ENCODE measurements at regions of chr1 and their contacts with region 1.

Region 1: GRCh38 chr1:164617377-164618201 is 58.6 kb downstream of the PBX1 start:
- DNase-seq: peak in 1 of 2 experiments; percentile 47
- H3K4me3 ChIP-seq: no peak overlapping the region
- H3K4me3 Mint-ChIP-seq: no peak overlapping the region
- H3K27ac Mint-ChIP-seq: no peak overlapping the region
- H3K4me1 ChIP-seq: peaks cover 32% of the 10 kb centered on the region
- H3K4me1 Mint-ChIP-seq: peaks cover 30% of the 10 kb centered on the region
- H3K27me3 ChIP-seq: no peaks in the 10 kb centered on the region
- H3K27me3 Mint-ChIP-seq: no peaks in the 10 kb centered on the region
- CTCF ChIP-seq: peak; percentile 44 to 46

Region 2: GRCh38 chr1:164440232-164440631 is 177.4 kb before region 1 on chr1:
- CTCF ChIA-PET with region 1: no interaction called
- POLR2A ChIA-PET with region 1: no interaction called
- intact Hi-C with region 1: loop called (anchors 5 kb)
- DNase-seq: peak; percentile 49 to 56
- H3K4me3 ChIP-seq: no peak overlapping the region
- H3K4me3 Mint-ChIP-seq: no peak overlapping the region
- H3K27ac Mint-ChIP-seq: no peak overlapping the region
- H3K4me1 ChIP-seq: no peaks in the 10 kb centered on the region
- H3K4me1 Mint-ChIP-seq: no peaks in the 10 kb centered on the region
- H3K27me3 ChIP-seq: no peaks in the 10 kb centered on the region
- H3K27me3 Mint-ChIP-seq: peaks cover 5% of the 10 kb centered on the region
- CTCF ChIP-seq: peak; percentile 29 to 69

Region 3: DNA sequence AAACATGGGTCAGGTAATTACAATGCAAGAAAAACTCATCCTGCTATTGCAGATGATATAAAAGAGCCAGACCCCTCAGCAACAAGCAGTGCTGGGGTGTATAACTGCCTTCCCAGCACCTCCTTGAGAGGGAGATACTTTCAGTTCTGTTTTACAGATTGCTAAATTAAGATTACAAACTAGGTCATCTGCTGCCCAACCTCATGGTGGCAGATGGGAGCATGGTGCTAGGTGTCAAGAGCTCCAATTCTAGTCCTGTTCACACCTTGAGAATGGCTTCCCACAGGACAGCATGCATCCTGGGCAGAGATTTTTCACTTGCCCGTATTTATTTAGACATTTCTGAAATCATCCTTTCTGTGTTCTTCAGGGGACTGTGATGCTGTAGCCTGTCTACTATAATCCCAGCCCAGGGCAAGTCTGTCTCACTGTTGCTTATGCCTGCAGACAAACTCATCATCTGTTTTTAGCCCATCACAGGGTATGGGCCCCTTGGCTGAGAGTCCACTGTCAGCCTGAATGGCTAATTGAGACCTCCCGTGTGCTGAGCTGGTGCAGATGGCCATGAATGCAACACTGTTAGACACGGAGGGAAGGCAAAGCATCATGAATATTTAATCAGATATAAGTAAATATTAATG is 98.8 kb before region 1 on chr1:
- CTCF ChIA-PET with region 1: interaction called, 3 read pairs
- POLR2A ChIA-PET with region 1: no interaction called
- intact Hi-C with region 1: loop called (anchors 1 kb)
- DNase-seq: peak in 1 of 2 experiments; percentile 13
- H3K4me3 ChIP-seq: no peak overlapping the region
- H3K4me3 Mint-ChIP-seq: no peak overlapping the region
- H3K27ac Mint-ChIP-seq: no peak overlapping the region
- H3K4me1 ChIP-seq: no peaks in the 10 kb centered on the region
- H3K4me1 Mint-ChIP-seq: no peaks in the 10 kb centered on the region
- H3K27me3 ChIP-seq: no peaks in the 10 kb centered on the region
- H3K27me3 Mint-ChIP-seq: no peaks in the 10 kb centered on the region
- CTCF ChIP-seq: peak in 1 of 2 experiments; percentile 21

Region 4: GRCh38 chr1:164637461-164638375 is 20.1 kb after region 1 on chr1:
- CTCF ChIA-PET with region 1: no interaction called
- POLR2A ChIA-PET with region 1: no interaction called
- intact Hi-C with region 1: no loop called
- DNase-seq: peak in 1 of 2 experiments; percentile 41
- H3K4me3 ChIP-seq: no peak overlapping the region
- H3K4me3 Mint-ChIP-seq: no peak overlapping the region
- H3K27ac Mint-ChIP-seq: peak overlapping the region; percentile 85
- H3K4me1 ChIP-seq: peaks cover 69% of the 10 kb centered on the region
- H3K4me1 Mint-ChIP-seq: peaks cover 50% of the 10 kb centered on the region
- H3K27me3 ChIP-seq: no peaks in the 10 kb centered on the region
- H3K27me3 Mint-ChIP-seq: no peaks in the 10 kb centered on the region
- CTCF ChIP-seq: no peak